ENCODE measurements at regions of chr11 and their contacts with region 1.

Region 1: DNA sequence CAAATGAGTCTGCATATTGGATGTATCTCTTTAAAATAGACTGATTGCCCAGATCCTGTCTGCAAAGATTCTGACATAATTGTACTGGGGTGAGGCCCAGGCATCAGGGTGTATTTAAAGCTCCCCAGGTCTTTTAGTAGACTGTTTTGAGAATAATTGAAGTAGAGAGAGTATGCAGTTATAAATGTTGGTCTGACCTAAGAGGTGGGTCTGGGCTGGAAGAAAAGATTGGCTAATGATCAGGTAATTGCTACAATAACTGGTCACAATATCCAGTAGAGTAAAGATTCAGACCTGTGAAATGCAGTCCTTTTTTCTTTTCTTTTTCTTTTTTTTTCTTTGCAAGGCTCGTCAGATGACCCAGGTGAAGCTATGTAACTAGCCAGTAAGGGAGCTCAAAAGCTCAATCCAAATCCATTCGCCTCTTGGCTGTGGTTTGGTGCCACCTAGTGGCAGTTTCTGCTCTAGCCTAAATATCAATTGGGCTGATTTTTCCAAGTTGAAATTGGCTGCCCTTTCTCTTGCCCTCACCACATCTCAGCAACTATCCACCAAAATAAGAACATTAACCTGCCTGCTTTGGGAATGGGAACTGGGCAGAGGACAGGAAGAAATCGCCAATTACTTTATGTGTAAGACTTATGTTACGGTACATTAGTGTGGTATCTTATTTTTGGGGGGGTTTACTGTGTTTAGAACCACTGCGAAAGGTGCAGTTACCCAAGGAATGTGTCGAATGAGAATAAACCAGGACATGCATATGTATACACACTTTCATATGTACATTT is 45.9 kb downstream of the ZNF143 start:
- DNase-seq: peak; percentile 27 to 87 (median 64)
- ATAC-seq: peak; percentile 77 to 82 (median 81)
- H3K4me3 ChIP-seq: no peak overlapping the region
- H3K4me3 Mint-ChIP-seq: no peak overlapping the region
- H3K27ac ChIP-seq: no peak overlapping the region
- H3K27ac Mint-ChIP-seq: peak overlapping the region in 1 of 2 donors; percentile 44
- H3K4me1 ChIP-seq: no peaks in the 10 kb centered on the region
- H3K4me1 Mint-ChIP-seq: peaks cover 8 to 10% (median 9%) of the 10 kb centered on the region in 3 donors
- H3K27me3 ChIP-seq: no peaks in the 10 kb centered on the region
- H3K27me3 Mint-ChIP-seq: no peaks in the 10 kb centered on the region

Region 2: DNA sequence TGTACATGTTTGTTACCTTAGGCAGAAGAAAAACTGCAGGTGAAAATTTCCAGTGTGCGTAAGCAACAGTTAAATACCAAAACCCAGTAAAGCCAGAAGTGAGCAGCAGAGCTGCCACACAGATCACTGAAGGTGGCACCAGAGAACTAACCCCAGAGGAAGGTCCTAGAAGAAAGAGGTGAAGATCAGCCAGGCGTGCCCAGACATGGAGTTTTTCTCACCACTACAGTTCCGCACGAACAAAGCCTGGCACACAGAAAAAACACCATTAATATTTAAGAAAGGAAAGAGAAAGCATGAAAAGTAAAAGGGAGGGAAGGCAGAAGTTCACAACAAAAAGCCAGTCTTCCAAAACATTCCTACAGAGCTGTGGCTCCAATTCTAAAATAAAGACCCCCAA is 973.4 kb before region 1 on chr11:
- CTCF ChIA-PET with region 1: no interaction called
- POLR2A ChIA-PET with region 1: no interaction called
- DNase-seq: no peak
- ATAC-seq: no peak
- H3K4me3 ChIP-seq: no peak overlapping the region
- H3K4me3 Mint-ChIP-seq: no peak overlapping the region
- H3K27ac ChIP-seq: no peak overlapping the region
- H3K27ac Mint-ChIP-seq: no peak overlapping the region
- H3K4me1 ChIP-seq: no peaks in the 10 kb centered on the region
- H3K4me1 Mint-ChIP-seq: peaks cover 0 to 5% (median 0%) of the 10 kb centered on the region in 3 donors
- H3K27me3 ChIP-seq: peaks cover 0 to 3% of the 10 kb centered on the region in 2 experiments
- H3K27me3 Mint-ChIP-seq: peaks cover 6 to 9% of the 10 kb centered on the region in 2 donors

Region 3: GRCh38 chr11:8911029-8911826 is 595.5 kb before region 1 on chr11 and contains the start of gene AKIP1:
- CTCF ChIA-PET with region 1: interaction called, 8 to 19 read pairs
- POLR2A ChIA-PET with region 1: no interaction called
- DNase-seq: peak; percentile 46 to 86 (median 67)
- ATAC-seq: peak; percentile 65 to 80 (median 68)
- H3K4me3 ChIP-seq: peak within 1 kb of the TSS; percentile 92 to 93
- H3K4me3 Mint-ChIP-seq: peak within 1 kb of the TSS; percentile 82 to 93 (median 90)
- H3K27ac ChIP-seq: peak within 1 kb of the TSS; percentile 53
- H3K27ac Mint-ChIP-seq: peak within 1 kb of the TSS; percentile 69 to 84
- H3K4me1 ChIP-seq: peaks cover 8 to 36% of the 10 kb centered on the region in 2 experiments
- H3K4me1 Mint-ChIP-seq: peaks cover 30 to 48% (median 43%) of the 10 kb centered on the region in 3 donors
- H3K27me3 ChIP-seq: no peaks in the 10 kb centered on the region
- H3K27me3 Mint-ChIP-seq: no peaks in the 10 kb centered on the region
- total RNA-seq, gene AKIP1: 5.8 to 17.9 (median 11.1) TPM

Region 4: DNA sequence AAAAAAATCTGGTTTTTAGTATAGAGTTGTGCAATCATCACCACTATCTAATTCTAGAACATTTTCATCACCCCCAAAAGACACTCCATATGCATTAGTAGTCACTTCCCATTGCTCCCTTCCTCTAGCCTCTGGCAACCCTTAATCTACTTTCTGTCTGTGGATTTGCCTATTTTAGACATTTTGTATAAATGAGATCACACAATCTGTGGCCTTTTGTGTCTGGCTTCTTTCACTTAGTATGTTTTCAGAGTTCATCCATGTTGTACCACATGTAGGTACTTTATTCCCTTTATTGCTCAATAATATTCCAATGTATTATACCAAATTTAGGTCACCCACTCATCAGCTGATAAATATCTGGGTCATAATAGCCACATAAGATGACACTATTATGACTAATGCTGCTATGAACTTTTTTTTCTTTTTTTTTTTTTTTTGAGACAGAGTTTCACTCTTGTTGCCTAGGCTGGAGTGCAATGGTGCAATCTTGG is 347.7 kb before region 1 on chr11:
- CTCF ChIA-PET with region 1: interaction called, 5 to 25 read pairs
- POLR2A ChIA-PET with region 1: no interaction called
- DNase-seq: no peak
- ATAC-seq: no peak
- H3K4me3 ChIP-seq: no peak overlapping the region
- H3K4me3 Mint-ChIP-seq: no peak overlapping the region
- H3K27ac ChIP-seq: no peak overlapping the region
- H3K27ac Mint-ChIP-seq: peak overlapping the region in 1 of 2 donors; percentile 11
- H3K4me1 ChIP-seq: no peaks in the 10 kb centered on the region
- H3K4me1 Mint-ChIP-seq: peaks cover 0 to 19% (median 13%) of the 10 kb centered on the region in 3 donors
- H3K27me3 ChIP-seq: no peaks in the 10 kb centered on the region
- H3K27me3 Mint-ChIP-seq: no peaks in the 10 kb centered on the region

Region 5: DNA sequence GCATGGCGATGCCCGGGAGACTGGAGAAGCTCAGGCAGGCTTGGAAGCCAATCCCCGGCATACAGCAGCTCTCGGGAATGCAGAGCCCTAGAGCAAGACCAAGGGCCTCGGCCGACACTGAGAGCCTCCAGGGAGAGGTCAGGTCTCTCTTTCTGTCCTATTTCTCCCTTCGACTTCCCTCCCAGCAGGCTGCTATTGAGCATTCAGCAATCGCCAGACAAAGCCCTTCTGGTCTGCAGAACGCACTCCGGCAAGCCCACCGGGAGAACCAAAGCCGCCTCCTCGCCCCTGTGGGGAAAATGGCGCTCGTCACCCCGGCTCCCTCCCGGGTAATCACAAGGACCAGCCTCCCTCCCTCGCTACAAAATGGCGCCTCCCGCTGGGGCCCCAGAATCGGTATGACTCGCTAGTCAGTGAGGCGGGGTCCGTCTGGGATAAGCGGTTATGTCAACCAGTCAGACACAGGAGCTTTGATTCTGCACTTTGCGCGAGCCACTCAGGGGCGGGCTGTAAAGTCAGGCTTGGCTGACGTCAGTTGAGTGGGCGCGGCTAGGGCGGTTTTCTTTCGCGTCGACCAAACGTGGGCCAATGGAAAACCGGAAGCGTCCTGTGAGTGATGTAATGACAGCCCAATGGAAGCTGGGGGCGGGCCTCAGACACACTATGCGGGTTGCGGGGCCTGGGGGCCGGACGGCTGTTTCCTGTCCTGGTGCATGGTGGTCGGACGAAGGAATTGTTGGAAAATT is 46.2 kb before region 1 on chr11 and contains the start of gene ZNF143:
- CTCF ChIA-PET with region 1: interaction called in 1 of 2 experiments, 11 read pairs
- POLR2A ChIA-PET with region 1: interaction called, 3 to 4 read pairs
- DNase-seq: peak; percentile 98 to 100 (median 100)
- ATAC-seq: peak; percentile 89 to 92 (median 90)
- H3K4me3 ChIP-seq: peak within 1 kb of the TSS; percentile 89 to 98
- H3K4me3 Mint-ChIP-seq: peak within 1 kb of the TSS; percentile 88 to 98 (median 98)
- H3K27ac ChIP-seq: peak within 1 kb of the TSS; percentile 96
- H3K27ac Mint-ChIP-seq: peak within 1 kb of the TSS; percentile 99 to 100
- H3K4me1 ChIP-seq: peaks cover 16 to 17% of the 10 kb centered on the region in 2 experiments
- H3K4me1 Mint-ChIP-seq: peaks cover 28 to 39% (median 28%) of the 10 kb centered on the region in 3 donors
- H3K27me3 ChIP-seq: no peaks in the 10 kb centered on the region
- H3K27me3 Mint-ChIP-seq: no peaks in the 10 kb centered on the region
- total RNA-seq, gene ZNF143: 30.1 to 51.2 (median 46.3) TPM

Region 6: DNA sequence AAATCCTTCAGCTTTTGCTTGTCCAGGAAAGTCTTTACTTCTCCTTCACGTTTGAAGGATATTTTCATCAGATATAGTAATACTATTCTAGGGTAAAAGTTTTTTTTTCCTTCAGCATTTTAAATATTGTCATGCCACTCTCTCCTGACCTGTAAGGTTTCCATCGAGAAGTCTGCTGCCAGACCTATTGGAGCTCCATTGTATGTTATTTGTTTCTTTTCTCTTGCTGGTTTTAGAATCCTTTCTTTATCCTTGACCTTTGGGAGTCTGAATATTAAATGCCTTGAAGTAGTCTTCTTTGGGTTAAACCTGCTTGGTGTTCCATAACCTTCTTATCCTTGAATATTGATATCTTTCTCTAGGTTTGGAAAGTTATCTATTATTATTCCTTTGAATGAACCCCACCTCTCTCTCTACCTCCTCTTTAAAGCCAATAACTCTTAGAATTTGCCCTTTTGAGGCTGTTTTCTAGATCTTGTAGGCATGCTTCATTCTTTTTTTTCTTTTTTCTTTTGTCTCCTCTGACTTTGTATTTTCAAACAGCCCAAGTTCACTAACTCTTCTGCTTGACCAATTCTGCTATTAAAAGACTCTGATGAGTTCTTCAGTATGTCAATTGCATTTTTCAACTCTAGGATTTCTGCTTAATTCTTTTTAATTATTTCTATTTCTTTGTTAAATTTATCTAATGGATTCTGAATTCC is 54.7 kb after region 1 on chr11:
- CTCF ChIA-PET with region 1: no interaction called
- POLR2A ChIA-PET with region 1: interaction called in 1 of 2 experiments, 10 read pairs
- DNase-seq: no peak
- ATAC-seq: no peak
- H3K4me3 ChIP-seq: no peak overlapping the region
- H3K4me3 Mint-ChIP-seq: no peak overlapping the region
- H3K27ac ChIP-seq: no peak overlapping the region
- H3K27ac Mint-ChIP-seq: no peak overlapping the region
- H3K4me1 ChIP-seq: peaks cover 0 to 3% of the 10 kb centered on the region in 2 experiments
- H3K4me1 Mint-ChIP-seq: peaks cover 0 to 9% (median 9%) of the 10 kb centered on the region in 3 donors
- H3K27me3 ChIP-seq: peaks cover 0 to 2% of the 10 kb centered on the region in 2 experiments
- H3K27me3 Mint-ChIP-seq: no peaks in the 10 kb centered on the region

Region 7: DNA sequence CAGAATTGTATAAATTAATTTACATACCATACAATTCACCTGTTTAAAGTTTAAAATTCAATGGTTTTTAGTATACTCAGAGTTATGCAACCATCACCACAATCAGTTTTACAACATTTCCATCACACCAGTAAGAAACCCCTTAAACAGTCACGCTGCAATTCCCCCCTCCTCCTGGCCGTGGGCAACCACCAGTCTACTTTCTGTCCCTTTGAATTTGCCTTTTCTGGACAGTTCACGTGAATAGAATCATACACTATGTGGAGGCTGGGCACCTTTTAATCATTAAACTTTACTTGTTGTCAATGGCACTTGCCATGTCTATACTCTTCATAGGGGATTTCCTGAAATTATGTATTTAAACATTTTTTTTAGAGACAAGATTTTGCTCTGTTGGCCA is 137.1 kb after region 1 on chr11:
- CTCF ChIA-PET with region 1: no interaction called
- POLR2A ChIA-PET with region 1: no interaction called
- DNase-seq: no peak
- ATAC-seq: no peak
- H3K4me3 ChIP-seq: no peak overlapping the region
- H3K4me3 Mint-ChIP-seq: no peak overlapping the region
- H3K27ac ChIP-seq: no peak overlapping the region
- H3K27ac Mint-ChIP-seq: no peak overlapping the region
- H3K4me1 ChIP-seq: peaks cover 0 to 3% of the 10 kb centered on the region in 2 experiments
- H3K4me1 Mint-ChIP-seq: peaks cover 0 to 2% (median 0%) of the 10 kb centered on the region in 3 donors
- H3K27me3 ChIP-seq: peaks cover 0 to 5% of the 10 kb centered on the region in 2 experiments
- H3K27me3 Mint-ChIP-seq: peaks cover 0 to 7% of the 10 kb centered on the region in 2 donors

Region 8: GRCh38 chr11:10225553-10225952 is 718.9 kb after region 1 on chr11:
- CTCF ChIA-PET with region 1: no interaction called
- POLR2A ChIA-PET with region 1: no interaction called
- DNase-seq: no peak
- ATAC-seq: no peak
- H3K4me3 ChIP-seq: no peak overlapping the region
- H3K4me3 Mint-ChIP-seq: no peak overlapping the region
- H3K27ac ChIP-seq: no peak overlapping the region
- H3K27ac Mint-ChIP-seq: no peak overlapping the region
- H3K4me1 ChIP-seq: no peaks in the 10 kb centered on the region
- H3K4me1 Mint-ChIP-seq: peaks cover 0 to 4% (median 0%) of the 10 kb centered on the region in 3 donors
- H3K27me3 ChIP-seq: no peaks in the 10 kb centered on the region
- H3K27me3 Mint-ChIP-seq: no peaks in the 10 kb centered on the region

Measured in T-cell (primary cell).